Activated CD4-positive, alpha-beta memory T cell treated with anti-CD3 and anti-CD28 coated beads for 36 hours (primary cell): ENCODE measurements at regions of chr9 and their contacts with region 1.

Region 1: DNA sequence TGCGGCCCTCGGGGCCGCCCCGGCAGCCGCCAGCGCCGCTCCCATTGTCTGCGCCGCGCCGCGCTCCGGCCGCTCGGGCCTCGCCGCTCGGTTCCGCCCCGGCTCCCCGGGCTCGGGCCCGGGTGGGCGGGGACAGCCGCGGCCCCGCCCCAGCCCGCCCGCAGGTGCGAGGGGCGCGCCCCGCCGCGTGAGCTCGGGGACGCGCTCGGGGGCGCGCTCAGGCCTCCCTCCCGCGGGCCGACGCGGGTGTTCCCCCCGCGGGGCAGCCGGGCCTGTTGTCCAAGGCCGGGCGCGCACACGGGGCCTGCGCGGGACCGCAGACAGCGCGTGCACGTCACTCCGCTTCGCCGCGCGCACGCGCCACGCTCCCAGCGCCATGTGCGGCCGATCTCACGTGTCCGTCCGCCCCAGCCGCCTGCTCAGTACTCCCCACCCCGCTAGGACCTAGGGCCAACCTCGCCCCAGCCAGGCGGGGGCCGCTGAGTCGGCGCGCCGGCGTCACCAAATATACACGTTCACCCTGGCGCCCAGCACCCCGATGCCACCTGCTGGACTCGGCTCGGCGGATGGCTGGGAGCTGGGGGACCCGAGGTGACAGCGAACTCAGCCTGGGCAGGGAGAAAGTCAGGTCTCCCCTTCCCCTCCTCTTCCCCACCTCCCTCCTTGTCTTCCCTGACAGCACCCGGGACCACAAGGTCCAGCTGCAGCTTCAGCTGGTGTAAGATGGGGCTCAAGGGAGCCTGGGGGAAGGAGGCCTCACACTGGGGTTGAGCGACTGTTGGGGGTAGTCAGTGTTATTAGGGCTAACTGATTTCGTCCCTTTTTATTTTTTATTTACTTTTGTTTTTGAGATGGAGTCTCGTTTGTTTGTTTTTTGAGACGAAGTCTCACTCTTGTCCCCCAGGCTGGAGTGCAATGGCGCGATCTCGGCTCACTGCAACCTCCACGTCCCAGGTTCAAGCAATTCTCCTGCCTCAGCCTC is 14.3 kb downstream of the GBGT1 start:
- DNase-seq: peak; percentile 90
- H3K4me3 Mint-ChIP-seq: peak overlapping the region; percentile 65
- H3K27ac Mint-ChIP-seq: peak overlapping the region; percentile 62
- H3K4me1 Mint-ChIP-seq: peaks cover 33% of the 10 kb centered on the region
- H3K27me3 Mint-ChIP-seq: no peaks in the 10 kb centered on the region

Region 2: DNA sequence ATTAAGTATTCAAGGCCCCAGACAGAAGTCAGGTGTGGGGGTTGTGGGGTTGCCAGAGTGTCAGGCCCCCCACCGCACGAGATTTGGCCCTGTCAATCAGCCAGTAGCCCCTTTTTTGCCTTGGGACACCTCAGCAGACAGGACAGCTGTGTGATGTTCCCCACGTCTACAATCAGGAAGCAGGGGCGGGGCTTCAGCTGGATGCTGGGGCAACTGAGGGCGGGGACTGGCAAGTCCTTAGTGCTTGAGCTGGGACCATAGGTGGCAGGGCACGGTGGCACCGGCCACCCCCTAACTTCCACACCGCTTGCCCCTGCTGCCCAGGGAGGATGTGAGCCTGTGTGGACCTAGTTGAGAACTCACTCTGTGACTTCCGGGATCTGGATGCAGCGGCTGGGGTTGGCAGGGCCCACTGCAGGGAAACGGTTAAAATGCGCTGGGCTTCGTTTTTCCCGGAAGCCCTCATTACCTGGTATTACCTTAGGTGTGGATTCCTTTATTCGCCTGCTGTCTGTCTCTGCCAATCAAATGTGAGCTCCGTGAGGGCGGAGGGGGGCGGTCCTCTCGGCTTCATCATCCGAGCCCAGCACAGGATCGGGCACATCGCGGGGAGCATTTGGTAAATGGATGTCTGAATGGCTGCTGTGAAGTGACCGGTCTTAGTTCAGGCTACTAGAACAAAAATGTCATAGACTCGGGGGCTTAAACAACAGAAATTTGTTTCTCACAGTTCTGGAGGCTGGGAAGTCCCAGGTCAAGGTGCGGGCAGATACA is 126.1 kb before region 1 on chr9:
- CTCF ChIA-PET with region 1: interaction called, 38 read pairs
- POLR2A ChIA-PET with region 1: no interaction called
- intact Hi-C with region 1: loop called (anchors 1 kb)
- DNase-seq: peak; percentile 71
- H3K4me3 Mint-ChIP-seq: peak overlapping the region; percentile 8
- H3K27ac Mint-ChIP-seq: no peak overlapping the region
- H3K4me1 Mint-ChIP-seq: peaks cover 12% of the 10 kb centered on the region
- H3K27me3 Mint-ChIP-seq: no peaks in the 10 kb centered on the region

Region 3: DNA sequence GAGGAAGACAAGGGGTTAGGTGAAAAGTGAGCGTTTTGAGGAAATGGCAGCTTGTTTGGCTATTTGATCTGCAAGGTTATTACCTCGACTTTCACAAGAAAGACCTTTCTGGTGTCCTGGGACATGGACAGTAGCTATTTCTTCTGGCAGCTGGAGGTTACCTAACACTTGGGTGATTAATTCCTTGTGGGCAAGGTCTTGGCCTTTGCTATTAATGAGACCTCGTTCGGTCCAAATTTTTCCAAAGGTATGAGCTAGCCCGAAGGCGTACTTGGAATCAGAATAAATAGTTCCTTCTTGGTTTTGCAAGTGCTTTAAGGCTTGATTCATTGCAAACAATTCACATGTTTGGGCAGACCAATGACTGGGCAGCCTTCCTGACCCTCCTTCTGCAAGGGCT is 113.7 kb before region 1 on chr9:
- CTCF ChIA-PET with region 1: interaction called, 42 read pairs
- POLR2A ChIA-PET with region 1: interaction called, 7 read pairs
- intact Hi-C with region 1: loop called (anchors 1 kb)
- DNase-seq: no peak
- H3K4me3 Mint-ChIP-seq: no peak overlapping the region
- H3K27ac Mint-ChIP-seq: no peak overlapping the region
- H3K4me1 Mint-ChIP-seq: peaks cover 39% of the 10 kb centered on the region
- H3K27me3 Mint-ChIP-seq: no peaks in the 10 kb centered on the region

Region 4: DNA sequence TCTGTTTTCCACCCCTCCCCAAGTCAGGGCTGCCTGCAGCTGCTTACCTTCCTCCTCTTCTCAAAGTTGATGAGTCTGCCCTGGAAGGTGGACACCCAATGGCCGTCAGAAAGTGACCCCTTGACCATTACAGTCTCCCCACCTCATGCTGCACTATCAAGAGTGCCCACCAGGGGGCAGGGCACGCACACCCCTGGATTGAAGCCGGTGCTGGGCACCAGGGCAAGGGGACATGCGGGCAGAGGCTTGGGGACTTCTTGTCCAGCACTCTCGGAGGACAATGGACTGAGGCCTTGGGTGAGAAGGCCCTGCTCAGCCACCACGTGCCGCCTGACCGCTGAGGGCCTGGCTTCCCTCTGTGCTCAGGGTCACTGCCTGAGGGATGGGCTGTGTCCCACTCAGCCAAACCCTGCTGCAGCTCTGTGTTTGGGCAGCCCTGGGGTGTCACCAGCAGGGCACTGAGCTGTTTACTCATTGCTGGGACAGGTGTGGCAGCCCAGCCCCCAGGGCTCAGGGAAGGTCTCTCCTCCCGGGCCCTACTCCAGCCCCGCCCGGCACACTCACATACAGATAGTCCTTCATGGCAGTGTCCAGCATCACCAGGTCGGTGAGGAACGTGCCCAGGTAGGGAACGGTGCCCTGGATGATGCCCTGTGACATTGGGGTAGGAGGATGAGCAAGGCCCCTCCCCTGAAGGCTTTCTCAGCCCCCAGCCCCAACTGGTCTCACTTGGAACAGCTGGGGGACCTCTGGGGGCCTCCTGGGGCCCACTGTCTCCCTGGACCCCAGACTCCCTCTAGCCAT is 46.0 kb before region 1 on chr9:
- CTCF ChIA-PET with region 1: interaction called, 552 read pairs
- POLR2A ChIA-PET with region 1: interaction called, 4 read pairs
- intact Hi-C with region 1: loop called (anchors 1 kb)
- DNase-seq: peak; percentile 63
- H3K4me3 Mint-ChIP-seq: no peak overlapping the region
- H3K27ac Mint-ChIP-seq: peak overlapping the region; percentile 44
- H3K4me1 Mint-ChIP-seq: no peaks in the 10 kb centered on the region
- H3K27me3 Mint-ChIP-seq: no peaks in the 10 kb centered on the region

Region 5: GRCh38 chr9:133160742-133161546 is 11.5 kb after region 1 on chr9:
- CTCF ChIA-PET with region 1: interaction called, 14 read pairs
- POLR2A ChIA-PET with region 1: no interaction called
- intact Hi-C with region 1: no loop called
- DNase-seq: peak; percentile 56
- H3K4me3 Mint-ChIP-seq: no peak overlapping the region
- H3K27ac Mint-ChIP-seq: no peak overlapping the region
- H3K4me1 Mint-ChIP-seq: peaks cover 2% of the 10 kb centered on the region
- H3K27me3 Mint-ChIP-seq: no peaks in the 10 kb centered on the region

Region 6: DNA sequence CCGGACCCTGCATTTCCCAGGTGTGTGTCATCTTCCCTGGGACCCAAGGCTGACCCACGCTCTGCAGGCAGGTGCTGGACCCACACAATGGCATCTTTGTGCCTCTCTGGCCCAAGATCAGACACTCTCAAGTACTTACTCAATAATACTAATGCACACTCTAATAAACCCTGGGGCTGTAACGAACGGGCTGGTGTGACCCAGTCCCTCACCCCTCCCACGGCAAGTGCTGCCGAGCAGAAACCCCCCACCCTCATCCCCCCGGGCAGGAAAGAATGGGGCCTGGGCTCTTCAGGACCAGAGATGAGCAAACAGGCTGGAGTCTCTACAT is 60.8 kb after region 1 on chr9:
- CTCF ChIA-PET with region 1: no interaction called
- POLR2A ChIA-PET with region 1: no interaction called
- intact Hi-C with region 1: no loop called
- DNase-seq: no peak
- H3K4me3 Mint-ChIP-seq: no peak overlapping the region
- H3K27ac Mint-ChIP-seq: no peak overlapping the region
- H3K4me1 Mint-ChIP-seq: no peaks in the 10 kb centered on the region
- H3K27me3 Mint-ChIP-seq: peaks cover 18% of the 10 kb centered on the region

Region 7: GRCh38 chr9:134067904-134068743 is 918.7 kb after region 1 on chr9 and contains the start of gene BRD3:
- CTCF ChIA-PET with region 1: no interaction called
- POLR2A ChIA-PET with region 1: no interaction called
- intact Hi-C with region 1: loop called (anchors 10 kb)
- DNase-seq: peak; percentile 85
- H3K4me3 Mint-ChIP-seq: peak within 1 kb of the TSS; percentile 87
- H3K27ac Mint-ChIP-seq: peak within 1 kb of the TSS; percentile 80
- H3K4me1 Mint-ChIP-seq: peaks cover 24% of the 10 kb centered on the region
- H3K27me3 Mint-ChIP-seq: peaks cover 13% of the 10 kb centered on the region
- total RNA-seq, gene BRD3: 29.2 to 30.0 TPM